ENCODE measurements at regions of chr1 and their contacts with region 1.

Region 1: GRCh38 chr1:221708987-221709386 is 32.9 kb downstream of the DUSP10 start:
- DNase-seq: no peak
- ATAC-seq: peak; percentile 74
- H3K4me3 ChIP-seq: no peak overlapping the region
- H3K27ac ChIP-seq: peak overlapping the region; percentile 81
- H3K4me1 ChIP-seq: peaks cover 51% of the 10 kb centered on the region
- H3K27me3 ChIP-seq: no peaks in the 10 kb centered on the region
- CTCF ChIP-seq: no peak
- EP300 ChIP-seq: peak; percentile 76 to 97
- POLR2A ChIP-seq: no peak
- RAD21 ChIP-seq: no peak; the same call in 1 of the 2 replicates

Region 2: DNA sequence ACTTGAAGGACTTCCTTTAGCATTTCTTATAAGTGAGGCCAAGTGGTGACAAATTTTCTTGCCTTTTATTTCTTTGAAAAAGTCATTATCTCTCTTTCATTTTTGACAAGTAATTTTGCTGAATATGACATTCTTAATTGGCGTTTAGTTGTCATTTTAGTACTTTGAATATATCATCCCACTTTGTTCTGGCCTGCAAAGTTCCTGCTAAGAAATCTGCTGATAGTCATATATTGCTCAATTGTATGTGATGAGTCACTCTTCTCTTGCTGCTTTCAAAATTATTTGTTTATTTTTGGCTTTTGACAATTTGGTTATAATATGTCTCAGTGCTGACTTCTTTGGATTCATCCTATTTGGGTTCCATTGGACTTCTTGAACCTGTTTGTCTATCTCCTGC is 279.7 kb before region 1 on chr1:
- CTCF ChIA-PET with region 1: no interaction called
- POLR2A ChIA-PET with region 1: no interaction called
- RAD21 ChIA-PET with region 1: no interaction called
- SMC1A ChIA-PET with region 1: no interaction called
- in situ Hi-C with region 1: no loop called
- intact Hi-C with region 1: no loop called
- DNase-seq: no peak
- ATAC-seq: no peak
- H3K4me3 ChIP-seq: no peak overlapping the region
- H3K27ac ChIP-seq: no peak overlapping the region
- H3K4me1 ChIP-seq: no peaks in the 10 kb centered on the region
- H3K27me3 ChIP-seq: no peaks in the 10 kb centered on the region; a peak in 1 of 4 replicates
- CTCF ChIP-seq: no peak
- EP300 ChIP-seq: no peak
- POLR2A ChIP-seq: no peak
- RAD21 ChIP-seq: no peak

Region 3: GRCh38 chr1:221543529-221544120 is 165.4 kb before region 1 on chr1:
- CTCF ChIA-PET with region 1: interaction called, 6 read pairs
- POLR2A ChIA-PET with region 1: no interaction called
- RAD21 ChIA-PET with region 1: interaction called, 20 read pairs
- SMC1A ChIA-PET with region 1: interaction called, 22 read pairs
- in situ Hi-C with region 1: no loop called
- intact Hi-C with region 1: loop called (anchors 5 kb)
- DNase-seq: no peak
- ATAC-seq: peak; percentile 64
- H3K4me3 ChIP-seq: no peak overlapping the region
- H3K27ac ChIP-seq: no peak overlapping the region
- H3K4me1 ChIP-seq: no peaks in the 10 kb centered on the region
- H3K27me3 ChIP-seq: no peaks in the 10 kb centered on the region
- CTCF ChIP-seq: peak; percentile 39 to 57 (median 53); a peak in 5 of 6 replicates
- EP300 ChIP-seq: no peak
- POLR2A ChIP-seq: no peak
- RAD21 ChIP-seq: peak; percentile 66

Region 4: DNA sequence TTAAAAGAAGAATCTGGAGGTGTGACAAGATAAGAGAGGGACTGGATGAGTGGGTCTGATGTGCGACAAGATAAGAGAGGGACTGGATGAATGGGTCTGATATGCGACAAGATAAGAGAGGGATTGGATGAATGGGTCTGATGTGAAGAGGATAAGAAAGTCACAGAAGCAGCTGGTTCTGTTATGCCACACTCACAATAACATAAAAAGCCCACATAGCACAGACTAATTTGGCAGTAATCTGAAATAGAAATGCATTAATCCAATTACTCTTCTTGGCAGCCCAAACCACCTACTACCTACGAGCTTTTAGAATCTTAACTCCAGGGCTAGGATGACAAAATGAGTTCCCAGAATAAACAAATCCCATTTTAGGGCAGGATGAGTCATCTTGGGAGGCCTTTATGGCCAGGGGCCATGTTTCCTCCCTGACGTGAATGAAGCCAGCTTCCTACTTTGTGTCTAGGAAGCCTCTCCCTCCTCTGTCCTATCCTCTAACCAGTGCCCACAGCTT is 96.7 kb before region 1 on chr1:
- CTCF ChIA-PET with region 1: no interaction called
- POLR2A ChIA-PET with region 1: no interaction called
- RAD21 ChIA-PET with region 1: no interaction called
- SMC1A ChIA-PET with region 1: no interaction called
- in situ Hi-C with region 1: no loop called
- intact Hi-C with region 1: no loop called
- DNase-seq: no peak
- ATAC-seq: no peak
- H3K4me3 ChIP-seq: no peak overlapping the region
- H3K27ac ChIP-seq: no peak overlapping the region
- H3K4me1 ChIP-seq: no peaks in the 10 kb centered on the region
- H3K27me3 ChIP-seq: no peaks in the 10 kb centered on the region
- CTCF ChIP-seq: no peak
- EP300 ChIP-seq: no peak
- POLR2A ChIP-seq: no peak
- RAD21 ChIP-seq: no peak

Region 5: DNA sequence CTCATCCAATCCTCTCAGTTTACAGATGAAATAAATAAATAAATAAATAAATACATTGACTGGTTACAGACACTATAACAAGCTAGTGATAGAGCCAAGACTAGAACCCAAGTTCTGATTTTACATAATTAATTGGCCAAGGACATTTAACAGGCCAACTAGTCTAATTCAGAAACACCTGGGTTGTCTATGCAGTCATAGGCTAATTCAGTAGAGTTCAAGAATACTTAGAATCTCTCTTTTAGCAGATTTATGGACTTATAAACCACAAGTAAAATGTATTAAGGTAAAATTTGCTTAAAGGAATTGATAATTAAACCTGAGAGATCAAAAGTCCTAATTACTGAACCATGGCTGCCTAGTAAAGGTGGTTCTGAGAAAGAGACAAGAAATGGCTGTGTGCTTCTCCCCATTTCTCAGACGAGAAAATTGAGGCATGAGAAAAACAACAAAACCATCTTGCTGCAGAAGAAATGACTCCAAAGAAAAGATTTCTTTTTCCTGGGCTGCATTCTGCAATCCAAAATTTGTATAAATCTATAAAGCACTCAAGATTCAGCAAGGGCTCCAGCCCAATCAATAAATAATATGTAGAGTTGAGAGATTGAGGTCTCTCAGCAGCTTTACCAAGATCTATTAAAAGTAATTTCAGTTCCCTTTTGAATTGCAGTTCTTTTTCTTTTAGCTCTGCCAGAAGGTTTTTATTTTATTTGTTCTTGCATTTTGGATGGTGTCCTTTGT is 65.4 kb before region 1 on chr1:
- CTCF ChIA-PET with region 1: interaction called, 12 read pairs
- POLR2A ChIA-PET with region 1: interaction called, 3 read pairs
- RAD21 ChIA-PET with region 1: interaction called, 8 read pairs
- SMC1A ChIA-PET with region 1: interaction called, 18 read pairs
- in situ Hi-C with region 1: no loop called
- intact Hi-C with region 1: loop called (anchors 5 kb)
- DNase-seq: peak; percentile 47
- ATAC-seq: peak; percentile 87
- H3K4me3 ChIP-seq: peak overlapping the region; percentile 29; the same call in 1 of the 2 replicates
- H3K27ac ChIP-seq: peak overlapping the region; percentile 74
- H3K4me1 ChIP-seq: peaks cover 18% of the 10 kb centered on the region
- H3K27me3 ChIP-seq: no peaks in the 10 kb centered on the region
- CTCF ChIP-seq: no peak
- EP300 ChIP-seq: no peak
- POLR2A ChIP-seq: no peak
- RAD21 ChIP-seq: no peak

Region 6: GRCh38 chr1:221672965-221673364 is 36.0 kb before region 1 on chr1:
- CTCF ChIA-PET with region 1: interaction called, 6 read pairs
- POLR2A ChIA-PET with region 1: no interaction called
- RAD21 ChIA-PET with region 1: interaction called, 7 read pairs
- SMC1A ChIA-PET with region 1: interaction called, 13 read pairs
- in situ Hi-C with region 1: no loop called
- intact Hi-C with region 1: no loop called
- DNase-seq: no peak
- ATAC-seq: no peak
- H3K4me3 ChIP-seq: no peak overlapping the region
- H3K27ac ChIP-seq: no peak overlapping the region
- H3K4me1 ChIP-seq: no peaks in the 10 kb centered on the region; the same call in 1 of the 2 replicates
- H3K27me3 ChIP-seq: no peaks in the 10 kb centered on the region
- CTCF ChIP-seq: no peak
- EP300 ChIP-seq: no peak
- POLR2A ChIP-seq: no peak
- RAD21 ChIP-seq: no peak

Region 7: GRCh38 chr1:221697923-221698425 is 11.0 kb before region 1 on chr1:
- CTCF ChIA-PET with region 1: interaction called, 8 read pairs
- POLR2A ChIA-PET with region 1: interaction called, 8 read pairs
- RAD21 ChIA-PET with region 1: interaction called, 8 read pairs
- SMC1A ChIA-PET with region 1: interaction called, 19 read pairs
- in situ Hi-C with region 1: no loop called
- intact Hi-C with region 1: no loop called
- DNase-seq: no peak
- ATAC-seq: peak; percentile 32
- H3K4me3 ChIP-seq: no peak overlapping the region
- H3K27ac ChIP-seq: no peak overlapping the region
- H3K4me1 ChIP-seq: no peaks in the 10 kb centered on the region
- H3K27me3 ChIP-seq: no peaks in the 10 kb centered on the region
- CTCF ChIP-seq: no peak
- EP300 ChIP-seq: no peak
- POLR2A ChIP-seq: no peak
- RAD21 ChIP-seq: no peak

Region 8: DNA sequence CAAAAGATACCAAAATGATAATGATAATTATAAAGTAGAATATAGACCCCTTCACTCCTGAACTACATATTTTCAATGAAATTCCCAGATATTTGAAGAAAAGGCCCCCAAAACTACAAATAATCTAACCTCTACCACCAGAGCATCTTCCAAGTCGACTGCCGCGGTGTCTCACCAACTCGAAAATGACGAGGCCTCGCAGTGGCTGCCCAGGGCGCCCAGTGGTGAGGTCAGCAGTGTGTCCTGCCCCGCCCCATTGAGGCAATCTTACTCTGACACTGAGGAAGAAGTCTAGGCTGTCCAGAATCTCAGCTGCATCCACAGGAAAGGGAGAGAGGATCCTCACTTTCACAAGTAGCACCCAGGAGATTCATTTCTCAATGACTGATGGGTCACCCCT is 27.7 kb after region 1 on chr1:
- CTCF ChIA-PET with region 1: interaction called, 24 read pairs
- POLR2A ChIA-PET with region 1: interaction called, 194 read pairs
- RAD21 ChIA-PET with region 1: interaction called, 235 read pairs
- SMC1A ChIA-PET with region 1: interaction called, 188 read pairs
- in situ Hi-C with region 1: no loop called
- intact Hi-C with region 1: no loop called
- DNase-seq: no peak
- ATAC-seq: peak; percentile 47
- H3K4me3 ChIP-seq: peak overlapping the region; percentile 90
- H3K27ac ChIP-seq: no peak overlapping the region
- H3K4me1 ChIP-seq: peaks cover 11% of the 10 kb centered on the region
- H3K27me3 ChIP-seq: no peaks in the 10 kb centered on the region
- CTCF ChIP-seq: no peak
- EP300 ChIP-seq: no peak
- POLR2A ChIP-seq: 0 out of 2 replicates have a peak, but pooled peaks have one; percentile 25
- RAD21 ChIP-seq: no peak

Region 9: GRCh38 chr1:221839796-221840395 is 130.9 kb after region 1 on chr1:
- CTCF ChIA-PET with region 1: no interaction called
- POLR2A ChIA-PET with region 1: interaction called, 3 read pairs
- RAD21 ChIA-PET with region 1: no interaction called
- SMC1A ChIA-PET with region 1: interaction called, 16 read pairs
- in situ Hi-C with region 1: no loop called
- intact Hi-C with region 1: no loop called
- DNase-seq: peak; percentile 94
- ATAC-seq: peak; percentile 93
- H3K4me3 ChIP-seq: no peak overlapping the region
- H3K27ac ChIP-seq: peak overlapping the region; percentile 45; the same call in 1 of the 2 replicates
- H3K4me1 ChIP-seq: peaks cover 42% of the 10 kb centered on the region
- H3K27me3 ChIP-seq: no peaks in the 10 kb centered on the region
- CTCF ChIP-seq: no peak
- EP300 ChIP-seq: peak; percentile 97
- POLR2A ChIP-seq: no peak
- RAD21 ChIP-seq: no peak

Region 10: DNA sequence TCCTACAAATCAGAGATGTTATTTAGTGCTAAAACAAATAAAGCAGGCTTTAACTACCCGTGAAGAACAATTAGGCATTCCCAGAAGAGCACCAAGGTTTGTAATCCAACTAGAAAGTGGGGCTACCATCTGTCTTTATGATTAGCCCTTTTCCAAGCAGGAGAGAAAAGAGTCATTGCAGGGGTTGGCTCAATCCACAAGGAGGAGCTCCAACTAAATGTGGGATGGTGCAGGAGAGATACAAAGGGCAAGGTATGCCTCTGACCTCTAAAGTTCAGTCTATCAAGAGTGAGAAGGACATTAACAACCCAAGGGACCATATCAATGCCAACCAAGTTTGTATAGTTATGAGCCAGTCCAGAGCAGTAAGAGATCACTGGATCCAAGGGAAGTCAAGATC is 415.6 kb after region 1 on chr1:
- CTCF ChIA-PET with region 1: no interaction called
- POLR2A ChIA-PET with region 1: no interaction called
- RAD21 ChIA-PET with region 1: no interaction called
- SMC1A ChIA-PET with region 1: no interaction called
- in situ Hi-C with region 1: no loop called
- intact Hi-C with region 1: no loop called
- DNase-seq: no peak
- ATAC-seq: no peak
- H3K4me3 ChIP-seq: no peak overlapping the region
- H3K27ac ChIP-seq: no peak overlapping the region
- H3K4me1 ChIP-seq: no peaks in the 10 kb centered on the region
- H3K27me3 ChIP-seq: no peaks in the 10 kb centered on the region
- CTCF ChIP-seq: 0 out of 6 replicates have a peak, but pooled peaks of 1 of the 3 experiments have one; percentile 9
- EP300 ChIP-seq: no peak
- POLR2A ChIP-seq: no peak
- RAD21 ChIP-seq: no peak

Measured in GM12878 (cell line).